MCF 10A (cell line): ENCODE measurements at regions of chr11 and their contacts with region 1.

Region 1: DNA sequence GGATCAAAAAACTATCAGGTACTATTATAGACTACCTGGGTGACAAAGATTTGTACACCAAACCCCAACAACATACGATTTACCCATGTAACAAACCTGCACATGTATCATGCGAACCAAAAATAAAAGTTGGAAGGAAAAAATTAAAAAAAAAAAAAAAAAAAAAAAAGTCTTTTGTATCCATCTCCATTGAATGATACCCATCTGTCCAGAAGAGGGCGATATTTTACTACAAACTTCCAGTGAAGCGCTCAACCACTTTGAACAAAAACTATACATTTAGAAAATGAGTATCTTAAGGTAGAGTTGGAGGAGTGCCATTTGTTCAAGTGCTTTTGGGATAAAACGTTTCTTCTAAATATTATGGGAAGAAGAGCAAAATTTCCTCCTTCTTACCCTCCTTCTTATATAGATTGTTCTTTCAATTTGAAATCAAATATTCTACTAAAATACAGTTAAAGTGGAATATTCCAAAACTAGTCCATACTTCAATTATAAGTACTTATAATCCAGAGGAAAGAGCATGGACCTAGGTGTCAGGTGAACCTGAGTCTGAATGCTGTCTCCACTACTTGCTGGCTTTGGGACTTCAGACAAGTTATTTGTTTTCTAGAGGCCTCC is 23.3 kb downstream of the ARL14EP start:
- DNase-seq: peak; percentile 71
- H3K4me3 Mint-ChIP-seq: no peak overlapping the region
- H3K27ac Mint-ChIP-seq: no peak overlapping the region
- H3K4me1 Mint-ChIP-seq: no peaks in the 10 kb centered on the region
- H3K27me3 Mint-ChIP-seq: peaks cover 21% of the 10 kb centered on the region
- CTCF ChIP-seq: peak; percentile 42

Region 2: GRCh38 chr11:30333405-30333804 is 12.8 kb before region 1 on chr11:
- CTCF ChIA-PET with region 1: interaction called, 36 read pairs
- POLR2A ChIA-PET with region 1: no interaction called
- intact Hi-C with region 1: no loop called
- DNase-seq: peak; percentile 25
- H3K4me3 Mint-ChIP-seq: no peak overlapping the region
- H3K27ac Mint-ChIP-seq: no peak overlapping the region
- H3K4me1 Mint-ChIP-seq: peaks cover 10% of the 10 kb centered on the region
- H3K27me3 Mint-ChIP-seq: no peaks in the 10 kb centered on the region
- CTCF ChIP-seq: peak; percentile 34

Region 3: DNA sequence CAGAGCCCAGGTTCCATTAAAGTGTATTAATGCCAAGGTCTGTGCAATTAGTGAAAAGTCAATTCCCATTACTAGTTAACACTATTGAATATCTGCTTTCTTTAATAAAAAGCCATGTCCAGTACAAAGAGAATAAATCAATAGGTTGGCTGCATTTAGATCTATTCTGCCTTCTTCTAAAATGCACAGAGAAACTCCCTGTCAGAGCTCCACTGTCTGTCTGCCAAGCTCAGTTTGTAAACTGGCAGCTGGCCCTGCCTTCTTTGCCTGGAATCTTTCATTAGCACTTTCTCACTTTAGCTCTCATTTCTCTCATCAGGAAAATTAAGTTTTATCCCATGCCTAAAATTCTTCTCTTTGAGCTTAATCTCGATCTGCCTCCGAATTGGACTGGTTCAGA is 12.4 kb after region 1 on chr11:
- CTCF ChIA-PET with region 1: interaction called, 13 read pairs
- POLR2A ChIA-PET with region 1: interaction called, 5 read pairs
- intact Hi-C with region 1: no loop called
- DNase-seq: no peak
- H3K4me3 Mint-ChIP-seq: no peak overlapping the region
- H3K27ac Mint-ChIP-seq: no peak overlapping the region
- H3K4me1 Mint-ChIP-seq: no peaks in the 10 kb centered on the region
- H3K27me3 Mint-ChIP-seq: peaks cover 79% of the 10 kb centered on the region
- CTCF ChIP-seq: no peak

Region 4: GRCh38 chr11:30392221-30392784 is 46.1 kb after region 1 on chr11:
- CTCF ChIA-PET with region 1: no interaction called
- POLR2A ChIA-PET with region 1: no interaction called
- intact Hi-C with region 1: no loop called
- DNase-seq: no peak
- H3K4me3 Mint-ChIP-seq: no peak overlapping the region
- H3K27ac Mint-ChIP-seq: no peak overlapping the region
- H3K4me1 Mint-ChIP-seq: no peaks in the 10 kb centered on the region
- H3K27me3 Mint-ChIP-seq: peaks cover 37% of the 10 kb centered on the region
- CTCF ChIP-seq: no peak

Region 5: DNA sequence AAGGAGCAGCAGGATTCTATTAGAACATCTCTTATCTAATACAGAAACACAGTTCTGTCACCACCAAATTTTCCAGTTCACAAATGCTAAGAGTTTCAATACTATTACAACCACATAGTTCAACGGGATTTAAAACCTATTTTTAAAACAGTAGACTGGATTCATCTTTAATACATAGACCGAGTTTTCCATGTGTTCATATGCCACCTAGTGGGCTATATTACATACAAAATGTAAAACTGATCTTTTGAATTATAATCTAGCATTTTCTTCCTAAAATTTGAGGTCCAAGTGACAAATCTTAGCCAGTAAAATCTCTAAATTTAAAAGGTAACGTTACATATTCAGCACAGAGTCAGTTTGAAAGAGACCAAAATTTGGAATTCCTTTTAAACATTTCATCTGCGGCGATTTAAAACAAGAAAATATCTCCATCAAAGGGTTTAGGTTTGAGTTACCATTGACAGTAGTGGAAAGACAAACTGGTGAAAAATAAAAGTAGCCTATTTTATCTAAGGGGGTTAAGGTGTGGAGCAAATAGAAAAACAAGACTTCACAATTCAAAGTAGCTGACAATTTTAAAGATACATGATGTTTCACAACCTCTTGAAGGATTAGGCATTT is 509.3 kb after region 1 on chr11:
- CTCF ChIA-PET with region 1: interaction called, 53 read pairs
- POLR2A ChIA-PET with region 1: interaction called, 3 read pairs
- intact Hi-C with region 1: loop called (anchors 1 kb)
- DNase-seq: peak; percentile 9
- H3K4me3 Mint-ChIP-seq: no peak overlapping the region
- H3K27ac Mint-ChIP-seq: no peak overlapping the region
- H3K4me1 Mint-ChIP-seq: no peaks in the 10 kb centered on the region
- H3K27me3 Mint-ChIP-seq: peaks cover 63% of the 10 kb centered on the region
- CTCF ChIP-seq: peak; percentile 8